ENCODE measurements at regions of chr19 and their contacts with region 1.

Region 1: GRCh38 chr19:1304197-1304924 is 18.7 kb downstream of the EFNA2 start:
- DNase-seq: no peak
- ATAC-seq: no peak
- H3K4me3 ChIP-seq: no peak overlapping the region
- H3K27ac ChIP-seq: no peak overlapping the region
- H3K4me1 ChIP-seq: no peaks in the 10 kb centered on the region
- H3K27me3 ChIP-seq: peaks cover 2% of the 10 kb centered on the region; the same call in 1 of the 2 replicates
- CTCF ChIP-seq: no peak
- POLR2A ChIP-seq: no peak
- RAD21 ChIP-seq: no peak

Region 2: DNA sequence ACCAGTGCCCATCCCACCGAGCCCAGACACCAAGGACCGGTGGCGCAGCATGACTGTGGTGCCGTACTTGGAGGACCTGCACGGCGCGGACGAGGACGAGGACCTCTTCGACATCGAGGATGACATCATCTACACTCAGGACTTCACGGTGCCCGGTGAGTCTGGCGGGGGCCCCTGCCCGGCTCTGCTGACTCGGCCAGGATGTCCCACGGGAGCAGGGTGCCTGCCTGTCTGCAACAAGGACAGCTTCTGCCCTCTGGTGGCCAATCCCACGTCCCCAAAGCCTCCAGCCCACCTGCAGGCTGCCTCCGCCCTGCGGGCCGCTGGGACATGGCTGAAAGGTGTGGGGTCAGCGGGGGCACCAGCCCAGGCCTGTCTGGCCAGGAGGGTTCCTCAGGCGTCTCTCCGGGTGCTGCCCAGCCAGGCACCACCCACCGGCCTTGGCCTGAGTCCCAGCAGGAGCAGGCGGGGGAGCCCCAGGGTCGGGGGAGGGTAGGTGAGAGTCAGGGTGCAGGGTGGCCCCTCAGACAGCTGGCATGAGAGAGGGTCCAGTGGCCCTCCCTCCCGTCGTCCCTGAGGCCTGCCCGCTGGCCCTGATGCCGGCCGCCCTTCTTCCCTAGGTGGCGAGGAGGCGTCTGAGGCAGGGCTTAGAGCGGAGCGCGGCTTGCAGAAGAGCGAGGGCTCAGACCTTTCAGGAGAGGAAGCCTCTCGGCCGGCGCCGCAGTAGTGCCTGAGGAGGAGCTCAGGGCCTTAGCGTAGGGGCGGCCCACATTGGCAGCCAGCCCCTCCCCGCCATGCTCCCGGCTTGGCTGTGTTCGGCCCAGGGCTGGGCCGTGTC is 81.1 kb before region 1 on chr19:
- CTCF ChIA-PET with region 1: no interaction called
- POLR2A ChIA-PET with region 1: no interaction called
- dilution Hi-C with region 1: no loop called
- in situ Hi-C with region 1: no loop called
- intact Hi-C with region 1: no loop called
- DNase-seq: peak; percentile 42
- ATAC-seq: peak; percentile 34; the same call in 1 of the 2 replicates
- H3K4me3 ChIP-seq: no peak overlapping the region
- H3K27ac ChIP-seq: no peak overlapping the region
- H3K4me1 ChIP-seq: no peaks in the 10 kb centered on the region
- H3K27me3 ChIP-seq: no peaks in the 10 kb centered on the region
- CTCF ChIP-seq: peak; percentile 45
- POLR2A ChIP-seq: no peak; the same call in 1 of the 2 replicates
- RAD21 ChIP-seq: peak; percentile 39

Region 3: DNA sequence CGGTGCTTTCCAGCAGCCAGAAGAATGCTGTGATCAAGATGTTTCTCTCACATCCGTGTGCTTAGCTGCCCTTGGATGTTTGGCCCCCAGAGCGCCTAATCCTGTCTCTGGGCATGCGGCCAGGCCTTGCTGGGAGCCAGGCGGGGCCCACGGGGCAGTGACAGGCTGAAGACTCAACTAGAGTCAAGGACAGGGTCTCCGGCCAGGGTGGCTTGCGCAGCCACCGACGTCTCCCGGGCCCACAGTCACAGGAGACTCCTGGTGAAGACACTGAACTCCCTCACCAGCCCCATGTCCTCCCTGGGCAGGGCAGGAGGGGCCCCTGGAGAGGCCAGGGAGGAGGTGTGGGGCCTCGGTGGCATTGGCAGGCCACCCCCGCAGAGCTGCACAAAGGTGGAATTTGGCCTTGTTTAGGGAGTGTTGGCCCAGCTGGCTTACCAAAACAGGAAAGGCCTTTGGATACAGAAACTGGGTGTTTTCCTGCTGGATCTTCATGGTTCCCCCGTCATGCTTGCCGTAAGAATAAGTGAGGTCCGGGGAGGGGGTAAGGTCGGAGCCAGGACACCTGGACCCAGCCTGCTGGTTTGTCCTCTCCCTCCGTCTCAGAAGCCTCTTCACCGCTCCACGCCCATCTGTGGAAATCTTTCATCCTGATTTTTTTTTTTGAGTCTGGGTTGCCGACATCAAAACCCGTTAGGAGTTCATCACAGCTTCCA is 69.3 kb after region 1 on chr19:
- CTCF ChIA-PET with region 1: no interaction called
- POLR2A ChIA-PET with region 1: no interaction called
- dilution Hi-C with region 1: no loop called
- in situ Hi-C with region 1: no loop called
- intact Hi-C with region 1: no loop called
- DNase-seq: peak; percentile 66
- ATAC-seq: peak; percentile 83
- H3K4me3 ChIP-seq: no peak overlapping the region
- H3K27ac ChIP-seq: 0 out of 2 replicates have a peak overlapping the region, but pooled peaks have one; percentile 7
- H3K4me1 ChIP-seq: peaks cover 9% of the 10 kb centered on the region
- H3K27me3 ChIP-seq: no peaks in the 10 kb centered on the region
- CTCF ChIP-seq: no peak
- POLR2A ChIP-seq: no peak
- RAD21 ChIP-seq: no peak

Region 4: GRCh38 chr19:1657746-1658145 is 353.4 kb after region 1 on chr19:
- CTCF ChIA-PET with region 1: no interaction called
- POLR2A ChIA-PET with region 1: interaction called, 28 read pairs
- dilution Hi-C with region 1: no loop called
- in situ Hi-C with region 1: no loop called
- intact Hi-C with region 1: no loop called
- DNase-seq: no peak
- ATAC-seq: no peak
- H3K4me3 ChIP-seq: no peak overlapping the region
- H3K27ac ChIP-seq: no peak overlapping the region
- H3K4me1 ChIP-seq: no peaks in the 10 kb centered on the region
- H3K27me3 ChIP-seq: peaks cover 3% of the 10 kb centered on the region; the same call in 1 of the 2 replicates
- CTCF ChIP-seq: no peak
- POLR2A ChIP-seq: no peak
- RAD21 ChIP-seq: no peak